Posterior vena cava (tissue), 2 donors: ENCODE measurements at regions of chr2 and their contacts with region 1.

Region 1: DNA sequence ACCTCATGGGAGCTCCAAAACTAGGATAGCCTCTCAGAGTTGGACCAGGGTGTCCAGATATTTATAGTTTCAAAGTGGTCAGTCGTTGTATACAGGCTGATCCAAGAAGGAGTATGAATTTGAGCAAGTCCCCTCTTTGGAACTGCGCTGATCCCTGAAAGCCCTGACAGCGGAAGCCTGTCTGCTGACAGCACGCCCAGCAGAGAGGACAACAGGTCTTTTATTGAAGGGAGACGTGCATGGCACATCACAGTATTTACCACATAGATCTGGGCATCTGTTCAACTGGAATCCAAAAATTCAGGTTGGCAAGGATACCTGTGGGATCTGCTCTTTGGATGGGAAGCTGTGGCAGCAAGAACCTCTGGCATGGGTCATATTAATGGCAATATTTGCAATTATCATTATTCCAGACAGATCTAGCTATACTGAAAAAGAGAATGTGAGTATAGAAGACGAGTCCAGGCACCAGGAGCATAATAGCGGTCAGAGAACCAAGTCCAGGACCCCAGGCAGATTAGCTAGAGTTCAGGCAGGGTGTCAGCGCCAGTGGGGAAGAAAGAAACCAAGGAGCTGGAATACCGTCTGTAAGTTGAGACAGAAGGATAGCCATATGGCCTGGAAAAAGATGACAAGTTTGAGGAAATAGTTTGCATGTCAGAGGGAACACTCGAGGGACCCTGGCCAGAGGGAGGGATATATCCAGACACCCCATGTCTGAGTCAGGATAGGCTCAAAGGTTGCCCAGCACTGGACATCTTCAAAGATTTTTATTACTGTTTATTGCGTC is 260.4 kb upstream of the FANCL start:
- DNase-seq: no peak

Region 2: GRCh38 chr2:58410549-58410948 is 91.0 kb before region 1 on chr2:
- intact Hi-C with region 1: no loop called
- DNase-seq: no peak

Region 3: GRCh38 chr2:58483312-58483711 is 18.3 kb before region 1 on chr2:
- intact Hi-C with region 1: loop called in 1 of 2 experiments (anchors 2 kb)
- DNase-seq: no peak